Mammary epithelial cell (primary cell): ENCODE measurements at regions of chr6 and their contacts with region 1.

Region 1: GRCh38 chr6:30742316-30743098 is at the start of gene FLOT1:
- DNase-seq: peak; percentile 99
- H3K4me3 ChIP-seq: peak within 1 kb of the TSS; percentile 69 to 93 (median 76)
- H3K27ac ChIP-seq: peak within 1 kb of the TSS; percentile 91
- H3K4me1 ChIP-seq: peaks cover 21% of the 10 kb centered on the region
- H3K27me3 ChIP-seq: no peaks in the 10 kb centered on the region
- CTCF ChIP-seq: no peak
- total RNA-seq, gene FLOT1: 53.9 to 57.5 TPM

Region 2: GRCh38 chr6:29995340-29995777 is 747.1 kb before region 1 on chr6:
- CTCF ChIA-PET with region 1: no interaction called
- dilution Hi-C with region 1: no loop called
- in situ Hi-C with region 1: no loop called
- intact Hi-C with region 1: no loop called
- DNase-seq: peak; percentile 52
- H3K4me3 ChIP-seq: no peak overlapping the region
- H3K27ac ChIP-seq: no peak overlapping the region
- H3K4me1 ChIP-seq: peaks cover 11% of the 10 kb centered on the region
- H3K27me3 ChIP-seq: no peaks in the 10 kb centered on the region
- CTCF ChIP-seq: no peak

Region 3: DNA sequence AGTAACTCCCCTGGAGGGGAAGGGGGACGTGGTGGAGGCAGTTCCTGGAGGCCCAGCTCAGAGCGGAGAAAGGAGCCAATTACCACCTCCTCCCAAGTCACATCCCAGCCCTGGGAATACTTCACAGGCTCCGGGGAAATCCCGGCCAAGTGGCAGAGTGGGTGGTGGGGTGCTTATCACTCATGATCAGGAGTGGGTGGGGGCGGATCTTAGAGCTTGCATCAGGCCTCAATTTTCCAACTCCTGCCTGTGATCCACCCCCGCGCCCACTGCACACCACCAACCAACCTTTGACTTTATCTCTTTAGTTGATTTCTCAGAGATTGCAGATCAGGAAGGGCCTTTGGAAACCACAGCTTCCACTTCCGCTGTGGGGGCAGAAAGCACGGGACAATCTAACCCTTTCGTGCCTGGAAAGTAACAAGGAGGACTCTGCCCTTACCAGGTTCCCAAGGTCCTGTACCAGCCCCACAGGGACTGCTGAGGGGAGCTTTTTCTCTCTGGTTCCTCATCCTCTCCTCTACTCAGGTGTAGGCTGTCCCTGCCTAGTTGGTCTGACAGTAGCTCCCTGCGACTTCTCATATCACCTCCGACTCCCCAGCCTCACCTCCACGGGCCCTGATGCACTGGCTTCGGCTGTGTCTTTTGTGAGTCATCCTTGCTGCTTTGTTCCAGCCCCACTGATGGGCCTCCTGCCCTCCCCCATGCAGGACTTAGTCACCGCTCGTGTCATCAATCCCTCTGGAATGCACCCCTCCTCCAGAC is 26.8 kb after region 1 on chr6:
- CTCF ChIA-PET with region 1: no interaction called
- dilution Hi-C with region 1: no loop called
- in situ Hi-C with region 1: no loop called
- intact Hi-C with region 1: loop called (anchors 1 kb)
- DNase-seq: peak; percentile 95
- H3K4me3 ChIP-seq: peak overlapping the region in 1 of 3 experiments; percentile 22
- H3K27ac ChIP-seq: peak overlapping the region; percentile 97
- H3K4me1 ChIP-seq: peaks cover 31% of the 10 kb centered on the region
- H3K27me3 ChIP-seq: no peaks in the 10 kb centered on the region
- CTCF ChIP-seq: no peak

Region 4: DNA sequence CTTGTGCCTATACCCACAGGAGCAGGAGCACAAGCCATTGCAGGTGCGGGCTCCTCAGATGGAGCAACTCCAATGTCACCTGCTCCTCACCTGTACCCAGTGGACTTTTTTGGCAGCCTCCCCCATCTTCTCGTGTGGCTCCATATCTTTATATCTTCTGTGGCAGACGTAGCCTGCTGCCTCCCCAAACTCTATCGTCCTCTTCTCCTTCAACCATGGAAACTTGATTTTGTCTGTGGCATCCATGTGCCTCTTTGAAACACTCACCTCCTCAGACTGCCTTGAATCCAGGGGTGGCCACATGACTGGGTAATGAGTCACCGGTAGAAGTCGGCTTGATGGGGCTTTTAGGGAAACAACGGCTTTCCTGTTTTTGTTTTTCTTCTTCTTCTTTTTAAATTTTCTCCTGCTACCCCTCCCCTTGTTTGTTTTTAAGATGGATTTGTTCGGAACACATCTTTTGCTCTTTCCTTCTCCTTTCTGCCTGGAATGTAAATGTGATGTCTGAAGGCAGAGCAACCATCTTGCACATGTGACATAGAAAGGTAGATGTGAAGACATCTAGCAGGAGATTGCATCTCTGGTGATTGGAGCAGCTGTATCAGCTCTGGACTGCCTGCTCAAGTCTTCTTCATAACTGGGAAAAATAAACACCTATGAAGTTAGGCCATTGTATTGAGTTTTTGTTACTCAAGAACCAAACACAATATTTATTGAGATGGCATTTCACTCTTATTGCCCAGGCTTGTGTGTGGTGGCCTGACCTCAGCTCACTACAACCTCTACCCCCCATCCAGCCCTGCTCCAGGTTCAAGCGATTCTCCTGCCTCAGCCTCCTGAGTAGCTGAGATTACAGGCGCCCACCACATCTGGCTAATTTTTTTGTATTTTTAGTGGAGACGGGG is 71.9 kb after region 1 on chr6:
- CTCF ChIA-PET with region 1: no interaction called
- dilution Hi-C with region 1: no loop called
- in situ Hi-C with region 1: loop called (anchors 5 kb)
- intact Hi-C with region 1: loop called (anchors 1 kb)
- DNase-seq: peak; percentile 88
- H3K4me3 ChIP-seq: no peak overlapping the region
- H3K27ac ChIP-seq: peak overlapping the region; percentile 72
- H3K4me1 ChIP-seq: peaks cover 51% of the 10 kb centered on the region
- H3K27me3 ChIP-seq: no peaks in the 10 kb centered on the region
- CTCF ChIP-seq: no peak

Region 5: GRCh38 chr6:30877419-30878371 is 135.2 kb after region 1 on chr6:
- CTCF ChIA-PET with region 1: no interaction called
- dilution Hi-C with region 1: no loop called
- in situ Hi-C with region 1: loop called in 1 of 2 experiments (anchors 5 kb)
- intact Hi-C with region 1: loop called (anchors 1 kb)
- DNase-seq: peak; percentile 80
- H3K4me3 ChIP-seq: peak overlapping the region in 2 of 3 experiments; percentile 13 to 20
- H3K27ac ChIP-seq: peak overlapping the region; percentile 63
- H3K4me1 ChIP-seq: peaks cover 37% of the 10 kb centered on the region
- H3K27me3 ChIP-seq: no peaks in the 10 kb centered on the region
- CTCF ChIP-seq: peak; percentile 92 to 96

Region 6: DNA sequence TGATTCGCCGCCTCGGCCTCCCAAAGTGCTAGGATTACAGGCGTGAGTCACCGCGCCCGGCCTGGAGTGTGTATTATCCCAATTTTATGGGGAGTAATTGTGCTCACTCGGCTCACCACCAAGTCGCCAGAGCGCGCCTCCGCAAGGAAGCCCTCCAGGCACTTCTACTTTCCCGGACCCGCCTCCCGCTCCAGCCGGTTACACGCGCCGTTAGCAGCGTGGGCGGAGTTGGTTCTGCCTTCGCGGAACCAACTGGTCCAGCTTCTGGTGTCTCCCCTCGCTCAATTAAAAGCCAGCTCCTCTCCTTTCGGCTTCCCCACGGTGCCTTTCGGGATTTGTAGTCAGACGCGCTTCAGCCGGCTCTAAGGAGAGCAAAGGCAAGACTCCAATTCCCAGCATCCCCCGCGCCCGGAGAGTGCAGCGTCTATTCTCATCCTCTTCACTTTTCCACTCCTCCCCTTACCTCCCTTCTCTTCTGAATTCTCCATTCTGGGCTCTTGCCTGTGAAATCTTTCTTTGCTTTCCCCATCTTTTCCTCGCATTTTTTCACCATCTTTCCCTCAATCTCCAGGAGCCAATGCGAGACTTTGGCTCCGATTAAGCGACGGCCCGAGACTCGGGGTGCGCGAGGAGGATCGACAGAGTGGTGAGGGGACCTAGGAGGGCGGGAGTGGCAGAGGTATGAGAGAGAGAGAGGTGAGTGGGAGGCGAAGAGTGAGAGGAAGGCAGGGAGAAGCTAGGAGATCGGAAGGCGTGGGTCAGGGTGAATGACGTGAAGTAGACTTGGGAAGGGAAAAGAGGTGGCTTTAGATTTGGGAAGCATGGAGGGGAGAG is 165.5 kb after region 1 on chr6 and contains the start of gene GTF2H4:
- CTCF ChIA-PET with region 1: no interaction called
- dilution Hi-C with region 1: no loop called
- in situ Hi-C with region 1: no loop called
- intact Hi-C with region 1: loop called (anchors 1 kb)
- DNase-seq: peak; percentile 99
- H3K4me3 ChIP-seq: peak within 1 kb of the TSS; percentile 70 to 92 (median 71)
- H3K27ac ChIP-seq: peak within 1 kb of the TSS; percentile 63
- H3K4me1 ChIP-seq: peaks cover 8% of the 10 kb centered on the region
- H3K27me3 ChIP-seq: no peaks in the 10 kb centered on the region
- CTCF ChIP-seq: no peak
- total RNA-seq, gene GTF2H4: 17.0 to 41.1 TPM